ENCODE measurements at regions of chr19 and their contacts with region 1.

Region 1: DNA sequence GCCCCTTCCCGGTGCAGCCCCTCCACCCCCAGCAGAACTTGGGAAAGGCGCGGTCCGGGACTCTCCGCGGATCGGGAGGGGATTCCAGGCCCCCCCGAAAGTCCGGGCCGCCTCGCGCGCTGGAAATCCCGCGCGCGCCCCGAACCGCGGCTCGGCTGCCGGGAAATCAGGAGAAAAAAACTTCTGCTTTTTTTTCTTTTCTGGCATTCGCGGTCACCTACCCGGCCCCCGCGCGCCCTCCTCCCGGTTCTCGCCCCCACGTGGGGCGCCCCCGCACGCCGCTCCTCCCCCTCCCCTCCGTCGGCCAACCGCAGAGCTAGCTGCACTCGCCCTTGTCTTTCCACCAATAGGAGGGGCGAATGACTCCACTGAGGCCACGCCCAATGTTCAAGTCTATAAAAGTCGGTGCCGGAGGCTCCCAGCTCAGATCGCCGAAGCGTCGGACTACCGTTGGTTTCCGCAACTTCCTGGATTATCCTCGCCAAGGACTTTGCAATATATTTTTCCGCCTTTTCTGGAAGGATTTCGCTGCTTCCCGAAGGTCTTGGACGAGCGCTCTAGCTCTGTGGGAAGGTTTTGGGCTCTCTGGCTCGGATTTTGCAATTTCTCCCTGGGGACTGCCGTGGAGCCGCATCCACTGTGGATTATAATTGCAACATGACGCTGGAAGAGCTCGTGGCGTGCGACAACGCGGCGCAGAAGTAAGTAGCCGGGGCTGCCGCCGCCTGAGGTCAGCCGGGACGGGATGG is at the start of gene GADD45B:
- DNase-seq: peak; percentile 98
- H3K4me3 Mint-ChIP-seq: peak within 1 kb of the TSS; percentile 98
- H3K27ac Mint-ChIP-seq: peak within 1 kb of the TSS; percentile 89
- H3K4me1 Mint-ChIP-seq: peaks cover 9% of the 10 kb centered on the region
- H3K27me3 Mint-ChIP-seq: no peaks in the 10 kb centered on the region
- CTCF ChIP-seq: no peak
- total RNA-seq, gene GADD45B: 28.0 and 53.8 TPM in 2 replicates

Region 2: DNA sequence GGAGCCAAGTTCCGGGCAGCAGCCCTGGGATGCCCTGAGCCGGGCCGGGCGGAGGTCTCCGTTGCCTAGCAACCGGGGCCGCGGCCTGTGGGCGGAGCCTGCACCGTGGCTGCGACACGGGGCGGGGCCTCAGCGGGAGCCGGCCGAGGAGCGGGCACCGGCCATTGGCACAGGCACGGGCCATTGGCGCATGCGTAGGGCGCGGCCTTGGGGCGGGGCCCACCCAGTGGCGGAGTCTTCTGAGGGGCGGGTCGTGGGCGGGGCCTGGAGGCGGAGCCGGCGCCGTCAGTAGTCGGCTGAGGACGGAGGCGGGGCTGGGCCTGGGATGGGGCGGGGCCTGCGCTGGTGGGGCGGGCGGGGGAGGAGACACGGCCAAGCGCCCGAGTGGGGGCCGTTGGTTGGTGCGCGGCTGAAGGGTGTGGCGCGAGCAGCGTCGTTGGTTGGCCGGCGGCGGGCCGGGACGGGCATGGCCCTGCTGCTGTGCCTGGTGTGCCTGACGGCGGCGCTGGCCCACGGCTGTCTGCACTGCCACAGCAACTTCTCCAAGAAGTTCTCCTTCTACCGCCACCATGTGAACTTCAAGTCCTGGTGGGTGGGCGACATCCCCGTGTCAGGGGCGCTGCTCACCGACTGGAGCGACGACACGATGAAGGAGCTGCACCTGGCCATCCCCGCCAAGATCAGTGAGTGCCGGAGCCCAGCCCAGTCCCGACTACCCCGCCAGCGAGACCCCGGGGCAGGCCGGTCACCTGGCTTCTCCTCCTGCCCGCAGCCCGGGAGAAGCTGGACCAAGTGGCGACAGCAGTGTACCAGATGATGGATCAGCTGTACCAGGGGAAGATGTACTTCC is 379.2 kb before region 1 on chr19 and contains the start of gene IZUMO4:
- CTCF ChIA-PET with region 1: no interaction called
- POLR2A ChIA-PET with region 1: no interaction called
- intact Hi-C with region 1: no loop called
- DNase-seq: peak; percentile 95
- H3K4me3 Mint-ChIP-seq: peak within 1 kb of the TSS; percentile 96
- H3K27ac Mint-ChIP-seq: peak within 1 kb of the TSS; percentile 92
- H3K4me1 Mint-ChIP-seq: peaks cover 5% of the 10 kb centered on the region
- H3K27me3 Mint-ChIP-seq: no peaks in the 10 kb centered on the region
- CTCF ChIP-seq: peak; percentile 30
- total RNA-seq, gene IZUMO4: 3.1 and 5.3 TPM in 2 replicates

Region 3: GRCh38 chr19:2328401-2329148 is 147.3 kb before region 1 on chr19 and contains the starts of genes LSM7 and SPPL2B:
- CTCF ChIA-PET with region 1: no interaction called
- POLR2A ChIA-PET with region 1: no interaction called
- intact Hi-C with region 1: no loop called
- DNase-seq: peak; percentile 91
- H3K4me3 Mint-ChIP-seq: peak within 1 kb of the TSS; percentile 93
- H3K27ac Mint-ChIP-seq: peak within 1 kb of the TSS; percentile 97
- H3K4me1 Mint-ChIP-seq: peaks cover 27% of the 10 kb centered on the region
- H3K27me3 Mint-ChIP-seq: no peaks in the 10 kb centered on the region
- CTCF ChIP-seq: no peak
- total RNA-seq, gene LSM7: 135 and 152 TPM in 2 replicates
- total RNA-seq, gene SPPL2B: 70.1 and 70.9 TPM in 2 replicates

Region 4: GRCh38 chr19:2455851-2456570 is 19.9 kb before region 1 on chr19:
- CTCF ChIA-PET with region 1: no interaction called
- POLR2A ChIA-PET with region 1: interaction called, 26 read pairs
- intact Hi-C with region 1: no loop called
- DNase-seq: peak; percentile 30
- H3K4me3 Mint-ChIP-seq: peak overlapping the region; percentile 77
- H3K27ac Mint-ChIP-seq: peak overlapping the region; percentile 85
- H3K4me1 Mint-ChIP-seq: peaks cover 18% of the 10 kb centered on the region
- H3K27me3 Mint-ChIP-seq: no peaks in the 10 kb centered on the region
- CTCF ChIP-seq: no peak

Region 5: GRCh38 chr19:2524838-2525723 is 49.2 kb after region 1 on chr19:
- CTCF ChIA-PET with region 1: interaction called, 6 read pairs
- POLR2A ChIA-PET with region 1: interaction called, 36 read pairs
- intact Hi-C with region 1: no loop called
- DNase-seq: peak; percentile 82
- H3K4me3 Mint-ChIP-seq: peak overlapping the region; percentile 25
- H3K27ac Mint-ChIP-seq: no peak overlapping the region
- H3K4me1 Mint-ChIP-seq: peaks cover 17% of the 10 kb centered on the region
- H3K27me3 Mint-ChIP-seq: no peaks in the 10 kb centered on the region
- CTCF ChIP-seq: no peak

Region 6: DNA sequence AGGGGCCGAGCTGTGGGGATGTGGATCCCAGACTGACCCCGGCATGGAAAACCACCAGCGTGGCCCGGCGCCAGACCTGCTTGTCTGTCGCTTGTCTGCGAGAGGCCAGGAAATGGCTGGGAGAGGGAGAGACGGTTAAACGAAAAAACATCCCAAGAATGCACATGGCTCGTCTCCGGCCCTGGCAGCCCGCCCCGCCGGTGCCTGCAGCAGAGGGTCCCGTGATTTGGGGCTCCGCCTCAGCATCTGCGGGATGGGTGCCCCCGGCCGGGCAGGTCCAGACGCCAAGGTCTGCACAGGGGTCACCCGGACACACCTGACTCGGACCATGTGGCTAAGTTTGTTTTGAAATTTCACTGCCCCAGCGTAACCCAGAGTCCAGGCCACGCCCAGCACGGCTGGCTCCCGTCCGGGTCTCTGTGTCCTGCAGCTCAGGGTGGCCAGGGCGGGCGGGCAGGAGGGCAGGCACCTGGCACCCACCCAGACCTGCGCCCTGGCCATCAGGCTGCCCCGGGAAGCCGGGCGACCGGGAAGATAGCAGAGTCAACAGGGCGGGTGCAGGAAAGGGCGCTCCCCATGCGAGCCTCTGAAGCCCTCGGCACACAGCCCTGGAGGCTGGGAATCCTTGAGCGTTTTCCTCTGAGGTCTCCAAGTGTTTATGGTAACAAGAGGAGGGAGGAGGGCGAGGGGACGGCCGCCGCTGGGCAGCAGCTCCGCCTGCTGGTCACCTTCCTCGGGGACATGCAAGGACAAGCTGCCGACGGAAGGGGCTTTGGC is 103.2 kb after region 1 on chr19:
- CTCF ChIA-PET with region 1: interaction called, 36 read pairs
- POLR2A ChIA-PET with region 1: interaction called, 136 read pairs
- intact Hi-C with region 1: loop called (anchors 1 kb)
- DNase-seq: peak; percentile 96
- H3K4me3 Mint-ChIP-seq: peak overlapping the region; percentile 67
- H3K27ac Mint-ChIP-seq: peak overlapping the region; percentile 40
- H3K4me1 Mint-ChIP-seq: peaks cover 5% of the 10 kb centered on the region
- H3K27me3 Mint-ChIP-seq: no peaks in the 10 kb centered on the region
- CTCF ChIP-seq: peak; percentile 86

Region 7: DNA sequence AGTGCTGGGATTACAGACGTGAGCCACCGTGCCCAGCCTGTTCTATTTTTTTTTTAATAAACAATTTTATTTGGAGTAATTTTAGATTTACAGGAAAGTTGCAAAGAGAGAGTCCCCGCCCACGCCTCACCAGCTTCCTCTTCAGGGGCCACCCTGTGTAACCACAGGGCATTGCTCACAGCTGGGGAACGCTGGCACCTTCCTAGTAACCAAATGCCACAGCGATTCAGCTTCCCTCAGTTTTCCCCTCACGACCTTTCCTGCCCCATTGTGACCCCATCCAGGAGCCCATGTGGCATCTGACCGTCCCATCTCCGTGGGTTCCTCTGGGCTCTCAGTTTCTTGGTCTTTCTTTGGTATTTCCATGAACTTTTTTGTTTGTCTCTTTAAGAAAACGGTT is 142.7 kb after region 1 on chr19:
- CTCF ChIA-PET with region 1: interaction called, 11 read pairs
- POLR2A ChIA-PET with region 1: interaction called, 104 read pairs
- intact Hi-C with region 1: no loop called
- DNase-seq: peak; percentile 89
- H3K4me3 Mint-ChIP-seq: peak overlapping the region; percentile 3
- H3K27ac Mint-ChIP-seq: peak overlapping the region; percentile 95
- H3K4me1 Mint-ChIP-seq: peaks cover 18% of the 10 kb centered on the region
- H3K27me3 Mint-ChIP-seq: no peaks in the 10 kb centered on the region
- CTCF ChIP-seq: no peak

Measured in MCF 10A (cell line).